Mammary epithelial cell (primary cell): ENCODE measurements at regions of chr6 and their contacts with region 1.

Region 1: DNA sequence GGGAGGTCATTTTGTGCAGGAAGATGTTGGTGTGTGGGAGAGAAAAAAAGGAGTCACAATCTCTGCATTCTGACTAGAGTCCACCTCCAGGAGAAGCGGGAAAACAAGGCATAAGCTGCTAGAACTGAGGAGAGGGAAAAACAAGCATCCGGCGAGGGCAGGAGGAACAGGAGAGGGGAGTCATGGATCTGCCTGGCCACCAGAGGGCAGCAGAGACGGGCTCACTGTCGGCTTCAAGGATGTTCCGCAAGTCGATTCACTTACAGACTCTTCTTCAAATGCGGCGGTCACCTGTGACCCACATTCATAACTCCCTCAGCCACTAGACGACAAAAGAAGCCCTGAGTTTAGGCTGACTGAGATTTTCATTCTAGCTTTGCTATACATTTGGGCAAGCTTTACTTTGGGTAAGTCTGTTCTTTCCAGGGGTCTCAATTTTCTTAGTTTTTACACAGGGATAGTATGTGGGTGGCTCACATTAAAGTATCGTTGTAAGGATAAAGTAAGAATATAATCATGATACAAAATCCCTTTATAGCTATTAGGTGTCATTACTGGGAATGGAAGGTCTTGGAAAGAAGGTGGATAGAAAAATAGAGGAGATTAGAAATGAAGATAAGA is 6.6 kb upstream of the BTNL2 start:
- DNase-seq: peak; percentile 37
- H3K4me3 ChIP-seq: no peak overlapping the region
- H3K27ac ChIP-seq: no peak overlapping the region
- H3K4me1 ChIP-seq: peaks cover 4% of the 10 kb centered on the region
- H3K27me3 ChIP-seq: no peaks in the 10 kb centered on the region
- CTCF ChIP-seq: peak; percentile 88 to 89

Region 2: DNA sequence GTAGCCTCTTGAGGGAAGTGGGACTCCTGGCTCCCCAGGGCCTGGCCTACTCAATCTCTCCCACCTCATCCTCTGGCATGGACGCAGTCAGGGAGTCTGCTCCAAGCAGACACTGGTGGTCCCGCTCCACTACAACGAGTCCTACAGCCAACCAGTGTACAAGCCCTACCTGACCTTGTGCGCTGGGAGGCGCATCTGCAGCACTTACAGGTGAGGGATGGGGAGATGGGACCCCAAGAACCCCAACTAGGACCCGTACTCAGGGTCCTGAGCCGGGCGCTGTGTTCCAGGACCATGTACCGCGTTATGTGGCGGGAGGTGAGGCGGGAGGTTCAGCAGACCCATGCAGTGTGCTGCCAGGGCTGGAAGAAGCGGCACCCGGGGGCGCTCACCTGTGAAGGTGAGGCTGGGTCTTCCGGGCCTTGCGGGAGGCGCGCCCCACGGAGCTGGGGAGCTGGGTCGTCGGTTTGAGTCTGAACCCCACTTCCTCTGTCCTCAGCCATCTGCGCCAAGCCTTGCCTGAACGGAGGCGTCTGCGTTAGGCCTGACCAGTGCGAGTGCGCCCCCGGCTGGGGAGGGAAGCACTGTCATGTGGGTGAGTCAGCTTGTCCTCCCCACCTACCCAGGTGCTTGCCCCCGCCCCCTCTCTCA is 247.0 kb before region 1 on chr6:
- CTCF ChIA-PET with region 1: no interaction called
- dilution Hi-C with region 1: no loop called
- in situ Hi-C with region 1: no loop called
- intact Hi-C with region 1: no loop called
- DNase-seq: no peak
- H3K4me3 ChIP-seq: no peak overlapping the region
- H3K27ac ChIP-seq: no peak overlapping the region
- H3K4me1 ChIP-seq: no peaks in the 10 kb centered on the region
- H3K27me3 ChIP-seq: no peaks in the 10 kb centered on the region
- CTCF ChIP-seq: no peak

Region 3: DNA sequence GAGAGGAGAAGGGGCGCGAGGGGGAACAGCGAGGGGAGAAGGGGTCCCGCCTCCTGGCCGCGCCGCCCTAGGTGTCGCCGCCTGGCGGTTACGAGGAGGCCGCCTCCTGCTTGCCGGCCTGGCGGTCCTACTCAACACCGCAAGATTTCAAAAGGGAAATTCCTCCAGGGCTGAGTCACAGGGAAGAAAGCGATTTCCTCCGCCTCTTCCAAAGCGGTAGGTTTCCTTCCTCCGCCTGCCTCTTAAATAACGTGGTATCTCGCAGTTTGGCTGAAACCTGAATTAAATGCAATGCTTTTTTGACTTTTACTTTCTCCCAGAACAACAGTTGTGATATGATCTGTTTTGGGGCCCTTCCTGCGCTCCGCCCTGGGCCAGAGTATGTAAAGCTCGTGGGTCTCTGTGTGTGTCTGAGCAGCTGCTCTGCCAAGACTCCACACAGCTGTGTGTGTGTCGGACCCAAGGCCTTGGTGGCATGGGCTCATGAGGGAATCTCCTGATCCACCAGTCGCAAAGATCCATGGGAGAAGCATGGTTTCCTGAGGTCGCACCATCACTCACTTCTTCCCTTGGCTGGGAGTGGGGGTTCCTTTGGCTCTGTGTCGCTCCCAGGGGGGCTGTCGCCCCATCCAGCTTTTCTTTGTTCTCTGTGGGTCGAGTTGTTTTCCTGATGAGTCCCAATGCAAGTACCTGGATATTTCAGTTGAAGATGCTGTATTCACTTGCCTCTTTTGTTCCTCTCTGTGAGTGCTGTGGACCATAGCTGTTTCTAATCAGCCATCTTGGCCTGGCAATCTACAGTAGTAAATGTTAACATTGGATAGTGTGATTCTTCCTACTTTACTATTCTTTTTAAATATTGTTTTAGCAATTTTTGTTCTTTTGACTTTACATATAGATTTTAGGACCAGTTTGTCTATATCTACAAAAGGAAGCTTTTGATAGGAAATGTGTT is 158.1 kb before region 1 on chr6:
- CTCF ChIA-PET with region 1: no interaction called
- dilution Hi-C with region 1: loop called (anchors 5 kb)
- in situ Hi-C with region 1: no loop called
- intact Hi-C with region 1: no loop called
- DNase-seq: peak; percentile 81
- H3K4me3 ChIP-seq: peak overlapping the region; percentile 21 to 32 (median 24)
- H3K27ac ChIP-seq: peak overlapping the region; percentile 25
- H3K4me1 ChIP-seq: peaks cover 6% of the 10 kb centered on the region
- H3K27me3 ChIP-seq: no peaks in the 10 kb centered on the region
- CTCF ChIP-seq: peak; percentile 20 to 76

Region 4: GRCh38 chr6:32700391-32701040 is 287.0 kb after region 1 on chr6:
- CTCF ChIA-PET with region 1: no interaction called
- dilution Hi-C with region 1: no loop called
- in situ Hi-C with region 1: loop called (anchors 5 to 10 kb)
- intact Hi-C with region 1: loop called (anchors 1 kb)
- DNase-seq: peak; percentile 52
- H3K4me3 ChIP-seq: no peak overlapping the region
- H3K27ac ChIP-seq: no peak overlapping the region
- H3K4me1 ChIP-seq: no peaks in the 10 kb centered on the region
- H3K27me3 ChIP-seq: peaks cover 2% of the 10 kb centered on the region
- CTCF ChIP-seq: peak; percentile 66 to 77

Region 5: GRCh38 chr6:32796848-32797776 is 383.6 kb after region 1 on chr6:
- CTCF ChIA-PET with region 1: no interaction called
- dilution Hi-C with region 1: no loop called
- in situ Hi-C with region 1: loop called in 1 of 2 experiments (anchors 5 kb)
- intact Hi-C with region 1: loop called (anchors 2 kb)
- DNase-seq: peak; percentile 54
- H3K4me3 ChIP-seq: peak overlapping the region in 2 of 3 experiments; percentile 19 to 30
- H3K27ac ChIP-seq: no peak overlapping the region
- H3K4me1 ChIP-seq: peaks cover 13% of the 10 kb centered on the region
- H3K27me3 ChIP-seq: no peaks in the 10 kb centered on the region
- CTCF ChIP-seq: peak; percentile 67 to 82

Region 6: GRCh38 chr6:32940656-32941213 is 527.2 kb after region 1 on chr6 and contains the start of gene HLA-DMB:
- CTCF ChIA-PET with region 1: no interaction called
- dilution Hi-C with region 1: no loop called
- in situ Hi-C with region 1: no loop called
- intact Hi-C with region 1: loop called (anchors 10 kb)
- DNase-seq: peak; percentile 65
- H3K4me3 ChIP-seq: peak within 1 kb of the TSS in 2 of 3 experiments; percentile 4 to 29
- H3K27ac ChIP-seq: no peak within 1 kb of the TSS
- H3K4me1 ChIP-seq: no peaks in the 10 kb centered on the region
- H3K27me3 ChIP-seq: no peaks in the 10 kb centered on the region
- CTCF ChIP-seq: no peak
- total RNA-seq, gene HLA-DMB: not detected